Activated T-helper 2 cell treated with anti-CD3 and anti-CD28 coated beads, Interferon-gamma antibody, Interleukin-2, Interleukin-4, amounts not matched to agents 10 μg/mL and 5 μg/mL and 100 μg/mL, durations not matched to agents 14 hours and 24 hours and 36 hours (primary cell): ENCODE measurements at regions of chr6 and their contacts with region 1.

Region 1: GRCh38 chr6:21664314-21665109 is 71.0 kb downstream of the SOX4 start:
- DNase-seq: no peak
- H3K4me3 Mint-ChIP-seq: peak overlapping the region; percentile 75
- H3K27ac Mint-ChIP-seq: no peak overlapping the region
- H3K4me1 Mint-ChIP-seq: peaks cover 16% of the 10 kb centered on the region
- H3K27me3 Mint-ChIP-seq: peaks cover 62% of the 10 kb centered on the region

Region 2: GRCh38 chr6:21748343-21749056 is 84.0 kb after region 1 on chr6:
- intact Hi-C with region 1: no loop called
- DNase-seq: no peak
- H3K4me3 Mint-ChIP-seq: no peak overlapping the region
- H3K27ac Mint-ChIP-seq: no peak overlapping the region
- H3K4me1 Mint-ChIP-seq: peaks cover 21% of the 10 kb centered on the region
- H3K27me3 Mint-ChIP-seq: no peaks in the 10 kb centered on the region

Region 3: DNA sequence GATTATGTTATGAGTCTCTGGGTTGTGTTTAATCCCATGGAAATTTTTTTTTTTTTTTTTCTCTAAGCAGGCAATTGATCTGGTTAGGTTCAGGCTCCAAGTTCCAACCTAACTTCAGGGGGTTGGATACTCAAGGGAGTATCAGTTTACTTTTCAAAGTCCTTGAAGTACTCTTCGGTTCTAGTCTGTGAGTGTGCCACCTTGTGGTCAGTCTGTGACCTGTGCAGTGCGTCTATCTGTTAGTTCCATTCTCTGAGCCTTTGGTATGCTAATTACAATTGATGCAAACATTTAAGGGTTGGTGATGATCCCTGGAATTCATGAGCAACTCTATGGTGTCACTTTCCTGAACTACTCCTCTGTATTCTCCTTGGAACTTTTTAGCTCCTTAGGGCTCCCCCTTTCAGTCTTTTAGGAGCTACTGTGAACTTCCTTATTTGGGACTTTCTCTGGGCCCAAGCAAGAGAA is 271.1 kb after region 1 on chr6:
- intact Hi-C with region 1: loop called (anchors 10 kb)
- DNase-seq: no peak
- H3K4me3 Mint-ChIP-seq: no peak overlapping the region
- H3K27ac Mint-ChIP-seq: no peak overlapping the region
- H3K4me1 Mint-ChIP-seq: no peaks in the 10 kb centered on the region
- H3K27me3 Mint-ChIP-seq: no peaks in the 10 kb centered on the region